HCT116 (cell line): ENCODE measurements at regions of chr20 and their contacts with region 1.

Region 1: DNA sequence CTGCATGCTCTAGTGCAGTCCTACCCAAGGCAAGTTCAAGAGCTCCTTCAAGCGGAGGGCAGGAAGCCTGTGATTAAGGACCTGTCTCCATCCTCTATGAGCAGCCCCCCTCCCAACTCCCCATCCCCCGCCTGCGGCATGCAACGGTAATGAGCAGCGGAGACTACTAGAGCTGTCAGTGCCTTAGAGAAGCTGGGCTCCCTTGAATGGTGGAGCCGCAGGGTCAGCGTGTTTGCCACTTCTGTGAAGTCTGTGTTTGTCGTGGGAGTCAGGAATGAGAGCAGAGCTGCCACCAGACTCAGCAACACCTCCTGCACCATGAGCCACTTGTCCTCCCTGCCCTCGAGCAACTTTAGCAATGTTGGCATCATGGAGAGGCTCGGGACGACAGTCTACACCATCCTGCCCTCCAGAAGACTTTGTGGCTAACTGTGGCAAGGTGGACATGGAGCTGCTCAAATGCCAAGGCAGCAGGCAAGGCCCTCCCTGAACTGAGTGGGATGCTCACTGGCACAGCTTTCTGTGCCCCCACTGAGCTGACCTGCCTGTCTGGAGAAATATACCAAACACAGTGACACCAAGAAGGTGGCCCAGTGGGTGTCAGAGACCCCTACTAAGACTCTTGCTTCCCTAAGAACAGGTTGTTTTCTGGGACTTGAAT is 23.8 kb upstream of the SYNDIG1 start:
- DNase-seq: no peak
- ATAC-seq: no peak
- H3K4me3 ChIP-seq: no peak overlapping the region
- H3K27ac ChIP-seq: no peak overlapping the region
- H3K4me1 ChIP-seq: no peaks in the 10 kb centered on the region
- H3K27me3 ChIP-seq: 0 out of 2 replicates have a peak, but pooled peaks cover 4% of the 10 kb centered on the region
- CTCF ChIP-seq: no peak
- POLR2A ChIP-seq: no peak
- RAD21 ChIP-seq: no peak

Region 2: GRCh38 chr20:24501764-24502556 is 56.3 kb after region 1 on chr20:
- CTCF ChIA-PET with region 1: no interaction called
- POLR2A ChIA-PET with region 1: no interaction called
- RAD21 ChIA-PET with region 1: no interaction called
- intact Hi-C with region 1: loop called (anchors 10 kb)
- DNase-seq: no peak
- ATAC-seq: no peak
- H3K4me3 ChIP-seq: no peak overlapping the region
- H3K27ac ChIP-seq: no peak overlapping the region
- H3K4me1 ChIP-seq: no peaks in the 10 kb centered on the region
- H3K27me3 ChIP-seq: peaks cover 19% of the 10 kb centered on the region
- CTCF ChIP-seq: no peak
- POLR2A ChIP-seq: no peak
- RAD21 ChIP-seq: no peak